Heart right ventricle (tissue), 16 donors: ENCODE measurements at regions of chr3 and their contacts with region 1.

Region 1: GRCh38 chr3:126083913-126084767 is at the start of gene SLC41A3:
- DNase-seq: peak; percentile 92 to 94
- ATAC-seq: peak; percentile 97 to 99 (median 98)
- H3K4me3 ChIP-seq: peak within 1 kb of the TSS; percentile 45 to 93 (median 78)
- H3K27ac ChIP-seq: peak within 1 kb of the TSS; percentile 77 to 94 (median 88)
- H3K4me1 ChIP-seq: peaks cover 0 to 27% (median 17%) of the 10 kb centered on the region in 9 donors
- H3K27me3 ChIP-seq: no peaks in the 10 kb centered on the region
- CTCF ChIP-seq: peak in 8 of 9 donors; percentile 16 to 65 (median 50)
- total RNA-seq, gene SLC41A3: 29.4 to 48.2 (median 40.1) TPM

Region 2: GRCh38 chr3:125967138-125967537 is 117.0 kb before region 1 on chr3:
- intact Hi-C with region 1: loop called in 1 of 10 experiments (anchors 10 kb)
- DNase-seq: no peak
- ATAC-seq: no peak
- H3K4me3 ChIP-seq: no peak overlapping the region
- H3K27ac ChIP-seq: no peak overlapping the region
- H3K4me1 ChIP-seq: peaks cover 0 to 7% (median 3%) of the 10 kb centered on the region in 9 donors
- H3K27me3 ChIP-seq: peaks cover 0 to 28% (median 25%) of the 10 kb centered on the region in 7 donors
- CTCF ChIP-seq: no peak

Region 3: GRCh38 chr3:125990253-125990970 is 93.7 kb before region 1 on chr3:
- intact Hi-C with region 1: loop called in 7 of 10 experiments (anchors 5 to 10 kb)
- DNase-seq: peak; percentile 91 to 93
- ATAC-seq: peak; percentile 96 to 99 (median 99)
- H3K4me3 ChIP-seq: peak overlapping the region; percentile 48 to 86 (median 62)
- H3K27ac ChIP-seq: peak overlapping the region in 9 of 10 donors; percentile 11 to 88 (median 81)
- H3K4me1 ChIP-seq: peaks cover 0 to 14% (median 8%) of the 10 kb centered on the region in 9 donors
- H3K27me3 ChIP-seq: peaks cover 0 to 9% (median 0%) of the 10 kb centered on the region in 7 donors
- CTCF ChIP-seq: no peak

Region 4: DNA sequence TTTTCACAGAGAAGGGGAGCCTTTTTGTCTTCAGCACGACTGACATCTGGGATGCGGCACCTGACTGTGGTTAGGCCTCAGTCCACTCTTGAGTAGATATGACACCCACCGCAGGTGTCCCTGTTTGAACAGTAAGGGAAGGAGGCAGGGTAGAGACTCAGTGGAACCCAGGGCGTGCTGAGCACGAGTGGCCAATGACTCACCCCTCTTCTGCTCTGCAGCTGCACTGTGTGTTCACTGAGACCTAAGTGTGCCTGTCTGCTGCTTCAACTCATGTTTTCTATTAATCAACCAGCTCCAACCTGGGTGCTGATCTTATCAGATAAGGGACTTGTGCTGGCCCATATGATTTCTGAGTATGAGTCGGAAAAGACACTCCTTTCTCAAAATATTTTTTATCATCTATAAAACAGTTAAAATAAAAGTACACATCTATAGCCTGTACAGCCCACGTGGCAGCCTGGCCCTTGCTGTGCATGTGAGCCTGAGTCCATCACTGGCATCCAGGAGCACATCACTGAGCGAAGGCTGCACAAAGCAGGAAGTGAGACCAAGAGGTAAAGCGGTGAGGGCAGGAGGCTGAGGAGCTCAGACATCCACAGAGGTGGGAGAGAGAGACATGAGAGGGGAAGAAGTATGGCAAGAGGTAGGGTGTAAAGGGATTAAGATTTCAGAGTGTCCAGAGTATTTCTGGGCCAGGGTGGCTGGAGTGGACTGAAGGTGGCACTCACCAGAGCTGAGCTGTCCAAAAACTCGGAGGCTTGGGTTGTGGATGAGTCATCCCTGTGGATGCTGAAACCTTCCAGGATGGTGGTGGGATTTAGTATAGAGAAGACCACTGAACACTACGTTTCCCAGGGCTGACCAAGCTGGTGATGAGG is 49.4 kb before region 1 on chr3:
- intact Hi-C with region 1: no loop called
- DNase-seq: no peak
- ATAC-seq: no peak
- H3K4me3 ChIP-seq: no peak overlapping the region
- H3K27ac ChIP-seq: no peak overlapping the region
- H3K4me1 ChIP-seq: peaks cover 0 to 4% (median 0%) of the 10 kb centered on the region in 9 donors
- H3K27me3 ChIP-seq: no peaks in the 10 kb centered on the region
- CTCF ChIP-seq: no peak

Region 5: DNA sequence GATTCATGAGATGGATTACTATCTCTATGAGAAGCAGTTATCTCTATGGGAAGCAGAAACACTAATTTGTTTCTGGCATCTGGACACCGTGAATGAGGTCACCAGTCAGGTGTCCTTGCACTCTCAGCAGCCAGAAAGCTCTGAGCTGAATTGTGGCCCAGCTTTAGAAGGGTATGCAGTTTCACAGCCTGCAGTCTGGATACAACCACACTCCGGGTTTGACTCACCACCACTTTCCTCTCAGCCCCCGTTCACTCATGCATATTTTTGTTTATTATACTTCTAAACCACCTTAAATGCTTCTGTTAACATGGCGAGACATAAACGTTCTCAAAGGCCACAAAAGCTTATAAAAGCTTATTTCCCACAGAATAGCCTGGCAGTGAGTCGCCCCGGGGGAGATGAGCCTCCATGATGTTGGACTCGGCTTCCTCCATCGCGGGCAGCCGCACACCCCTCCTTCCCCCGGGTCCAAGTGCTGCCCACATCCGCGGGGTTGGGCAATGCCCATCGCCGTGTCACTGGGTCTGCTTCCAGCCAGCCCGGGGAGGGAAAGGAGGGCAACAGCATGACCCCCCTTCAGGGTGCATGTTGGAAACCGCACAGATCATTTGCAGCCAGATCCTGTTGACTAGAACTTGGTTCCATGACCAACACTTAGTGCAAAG is 16.6 kb after region 1 on chr3:
- intact Hi-C with region 1: no loop called
- DNase-seq: no peak
- ATAC-seq: peak; percentile 21 to 70 (median 42)
- H3K4me3 ChIP-seq: no peak overlapping the region
- H3K27ac ChIP-seq: peak overlapping the region in 6 of 10 donors; percentile 0 to 75 (median 24)
- H3K4me1 ChIP-seq: peaks cover 9 to 38% (median 26%) of the 10 kb centered on the region in 9 donors
- H3K27me3 ChIP-seq: no peaks in the 10 kb centered on the region
- CTCF ChIP-seq: no peak

Region 6: DNA sequence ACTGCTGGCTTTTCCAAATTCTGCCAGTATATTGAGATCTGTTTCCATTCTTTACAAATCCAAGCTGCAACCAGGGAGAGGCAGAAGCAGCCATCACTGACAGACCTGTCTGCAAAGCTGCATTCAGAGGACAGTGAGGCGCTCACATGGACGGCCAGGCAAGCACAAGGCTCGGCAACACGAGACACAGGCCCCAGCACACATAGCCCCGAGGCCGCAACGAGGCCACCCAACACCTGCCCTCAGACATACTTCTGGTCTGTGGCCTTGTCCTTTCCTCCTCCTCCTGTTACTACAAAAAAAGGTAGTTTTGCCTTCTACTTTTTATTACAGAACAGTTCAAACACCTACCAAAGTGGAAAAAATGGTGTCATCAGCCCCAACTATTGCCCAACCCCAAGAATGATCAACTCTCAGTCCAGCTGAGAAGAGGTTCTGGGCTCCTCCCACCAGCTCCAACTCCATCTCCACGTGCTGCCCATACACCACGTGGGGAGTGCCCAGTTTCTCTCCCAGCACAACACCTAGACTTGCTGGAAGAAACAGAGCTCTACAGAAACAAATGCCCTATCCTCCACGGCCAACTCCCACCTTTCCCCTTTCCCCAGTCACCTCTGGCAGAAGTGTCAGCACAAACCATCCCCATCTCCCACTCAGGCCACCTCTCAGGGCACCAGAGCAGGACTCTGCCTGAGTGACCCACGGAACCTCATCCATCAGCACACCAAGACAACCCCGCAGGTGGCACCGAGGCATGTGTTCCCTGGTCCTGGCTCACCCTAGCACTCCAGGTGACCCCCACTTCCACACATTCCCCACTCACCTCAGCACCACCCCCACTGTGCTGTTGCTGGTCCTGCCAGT is 384.1 kb after region 1 on chr3:
- intact Hi-C with region 1: no loop called
- DNase-seq: no peak
- ATAC-seq: peak in 3 of 8 donors; percentile 10 to 44 (median 32)
- H3K4me3 ChIP-seq: no peak overlapping the region
- H3K27ac ChIP-seq: peak overlapping the region in 2 of 10 donors; percentile 2 to 37
- H3K4me1 ChIP-seq: peaks cover 15 to 68% (median 47%) of the 10 kb centered on the region in 9 donors
- H3K27me3 ChIP-seq: no peaks in the 10 kb centered on the region
- CTCF ChIP-seq: no peak

Region 7: GRCh38 chr3:126607214-126607908 is 523.2 kb after region 1 on chr3:
- intact Hi-C with region 1: no loop called
- DNase-seq: no peak
- ATAC-seq: peak in 4 of 8 donors; percentile 67 to 87 (median 76)
- H3K4me3 ChIP-seq: no peak overlapping the region
- H3K27ac ChIP-seq: no peak overlapping the region
- H3K4me1 ChIP-seq: peaks cover 0 to 9% (median 0%) of the 10 kb centered on the region in 9 donors
- H3K27me3 ChIP-seq: no peaks in the 10 kb centered on the region
- CTCF ChIP-seq: no peak

Region 8: GRCh38 chr3:128060473-128061381 is 1976.6 kb after region 1 on chr3:
- intact Hi-C with region 1: loop called in 1 of 10 experiments (anchors 5 kb)
- DNase-seq: no peak
- ATAC-seq: no peak
- H3K4me3 ChIP-seq: no peak overlapping the region
- H3K27ac ChIP-seq: no peak overlapping the region
- H3K4me1 ChIP-seq: peaks cover 0 to 12% (median 4%) of the 10 kb centered on the region in 9 donors
- H3K27me3 ChIP-seq: no peaks in the 10 kb centered on the region
- CTCF ChIP-seq: no peak